Right ventricle myocardium superior (tissue), 1 donor: ENCODE measurements at regions of chr13 and their contacts with region 1.

Region 1: DNA sequence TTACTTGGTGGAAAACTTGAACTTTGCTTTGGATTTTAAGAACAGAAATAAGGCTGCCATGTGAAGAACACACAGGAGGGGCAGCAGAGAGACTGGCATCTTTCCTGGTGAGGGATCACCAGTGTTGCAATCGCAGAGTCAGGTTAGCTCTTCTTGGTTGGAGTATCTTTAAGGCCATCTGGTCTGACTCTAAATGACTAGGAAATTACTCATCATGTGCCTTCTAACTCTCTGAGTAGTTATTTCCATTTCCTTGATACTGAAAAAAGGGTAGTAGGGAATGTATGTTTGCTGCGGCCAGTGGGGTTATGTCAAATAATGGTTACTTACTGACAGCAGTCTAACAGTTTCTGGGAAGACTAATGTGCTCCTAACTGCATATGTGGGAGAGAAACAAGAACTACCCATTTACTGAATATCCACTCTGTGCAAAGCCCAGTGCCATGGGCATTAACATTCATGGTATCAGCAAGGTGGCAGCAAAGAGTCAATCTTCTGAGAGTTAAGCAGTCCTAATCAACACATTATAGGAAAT is 122.1 kb downstream of the COG6 start:
- DNase-seq: no peak
- ATAC-seq: peak; percentile 37

Region 2: DNA sequence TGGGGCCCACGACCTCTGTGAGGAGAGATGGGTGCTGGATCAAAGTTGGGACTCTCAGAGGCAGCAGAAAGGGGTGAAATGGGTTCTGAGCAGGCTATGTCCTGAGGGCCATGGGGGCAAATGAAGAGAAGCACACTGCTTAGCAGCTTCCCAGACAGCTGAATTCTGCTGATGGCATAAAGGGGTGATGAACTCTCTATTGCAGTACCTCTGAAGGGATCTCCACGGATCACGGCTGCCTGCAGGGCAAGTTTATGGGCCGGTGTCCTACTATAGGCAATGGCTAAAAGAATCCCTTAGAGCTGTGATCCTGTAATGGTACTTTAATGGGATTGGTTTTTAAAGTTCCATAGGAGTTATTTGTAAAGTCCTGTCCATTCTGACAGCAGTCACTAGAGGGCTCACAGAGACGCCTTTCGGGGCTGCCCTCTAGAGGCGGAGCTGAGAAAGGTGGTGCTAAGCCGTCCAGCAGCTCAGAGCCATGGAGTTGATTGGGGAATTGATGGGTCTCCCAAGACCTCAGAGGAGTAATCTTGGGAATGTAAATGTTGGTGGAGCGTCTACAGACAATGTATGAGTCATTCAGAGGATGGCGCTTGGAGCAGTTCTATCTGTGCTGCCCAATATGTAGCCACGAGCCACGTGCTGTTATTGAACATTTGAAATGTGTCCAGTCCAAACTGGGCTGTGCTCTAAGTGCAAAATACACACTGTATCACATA is 165.1 kb after region 1 on chr13:
- intact Hi-C with region 1: loop called (anchors 10 kb)
- DNase-seq: peak; percentile 74
- ATAC-seq: peak; percentile 94

Region 3: DNA sequence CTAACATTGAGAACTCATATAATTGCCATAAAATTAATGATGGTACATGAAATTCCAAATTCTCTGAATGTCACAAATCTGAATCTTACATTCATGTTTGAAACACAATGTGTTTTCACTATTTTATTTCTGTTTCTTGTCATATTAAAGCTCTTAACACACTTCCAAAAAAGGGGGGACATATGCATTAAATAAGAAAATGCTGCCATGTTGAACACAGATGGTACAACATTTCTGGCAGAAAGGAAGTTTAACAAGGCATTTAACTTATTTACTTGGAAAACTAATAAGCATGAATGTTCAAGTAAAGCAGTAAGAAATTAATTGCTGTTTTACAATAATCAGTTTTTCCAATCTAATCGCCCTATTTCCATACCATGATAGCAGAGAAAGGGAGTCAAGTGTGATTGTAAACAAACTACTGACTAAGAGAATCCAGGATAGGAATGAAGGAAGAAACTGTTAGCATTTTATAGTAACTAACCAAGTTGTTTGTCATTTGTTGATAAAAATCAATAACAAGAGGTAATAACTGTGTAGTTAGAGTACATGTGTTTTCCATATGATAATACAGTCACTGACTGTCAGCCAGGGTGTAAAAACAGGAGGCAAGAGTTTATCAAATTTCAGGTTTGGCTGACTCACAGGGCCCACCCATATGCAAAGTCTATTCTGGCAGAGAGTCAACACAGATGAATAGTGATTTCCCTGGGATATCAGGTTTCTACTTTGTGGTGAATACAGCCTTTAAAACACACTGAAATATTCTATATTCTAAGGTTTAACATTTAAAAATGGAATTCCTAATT is 894.6 kb after region 1 on chr13:
- intact Hi-C with region 1: loop called (anchors 10 kb)
- DNase-seq: no peak
- ATAC-seq: no peak